Common myeloid progenitor, CD34-positive (primary cell): ENCODE measurements at regions of chr9 and their contacts with region 1.

Region 1: DNA sequence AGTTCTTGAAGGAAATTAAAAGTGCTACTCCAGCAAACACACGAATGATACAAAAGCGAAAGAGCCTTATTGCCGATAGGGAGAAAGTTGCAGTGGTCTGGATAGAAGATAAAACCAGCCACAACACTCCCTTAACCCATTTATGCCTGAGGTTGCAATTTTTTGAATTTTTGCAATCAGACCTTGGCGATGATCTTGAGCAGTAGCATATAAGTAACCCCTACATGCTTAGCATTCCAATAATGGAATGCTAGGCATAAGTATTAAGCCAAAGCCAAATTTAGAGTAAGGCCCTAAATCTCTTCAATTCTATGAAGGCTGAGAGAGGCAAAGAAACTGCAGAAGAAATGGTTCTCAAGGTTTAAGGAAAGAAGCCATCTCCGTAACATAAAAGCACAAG is 153.5 kb downstream of the SLC28A3 start:
- DNase-seq: no peak
- H3K4me3 ChIP-seq: no peak overlapping the region
- H3K27ac ChIP-seq: no peak overlapping the region
- H3K4me1 ChIP-seq: no peaks in the 10 kb centered on the region
- H3K27me3 ChIP-seq: peaks cover 0 to 2% (median 1%) of the 10 kb centered on the region in 5 experiments

Region 2: GRCh38 chr9:84173404-84173704 is 13.7 kb before region 1 on chr9:
- CTCF ChIA-PET with region 1: interaction called, 10 read pairs
- POLR2A ChIA-PET with region 1: no interaction called
- DNase-seq: no peak
- H3K4me3 ChIP-seq: no peak overlapping the region
- H3K27ac ChIP-seq: no peak overlapping the region
- H3K4me1 ChIP-seq: peaks cover 0 to 2% (median 0%) of the 10 kb centered on the region in 4 experiments
- H3K27me3 ChIP-seq: no peaks in the 10 kb centered on the region